MCF 10A (cell line): ENCODE measurements at regions of chrX and their contacts with region 1.

Region 1: GRCh38 chrX:45849253-45849862 is 648.7 kb upstream of the DIPK2B start:
- DNase-seq: peak; percentile 75
- H3K4me3 Mint-ChIP-seq: peak overlapping the region; percentile 89
- H3K27ac Mint-ChIP-seq: peak overlapping the region; percentile 67
- H3K4me1 Mint-ChIP-seq: no peaks in the 10 kb centered on the region
- H3K27me3 Mint-ChIP-seq: peaks cover 14% of the 10 kb centered on the region
- CTCF ChIP-seq: peak; percentile 26

Region 2: DNA sequence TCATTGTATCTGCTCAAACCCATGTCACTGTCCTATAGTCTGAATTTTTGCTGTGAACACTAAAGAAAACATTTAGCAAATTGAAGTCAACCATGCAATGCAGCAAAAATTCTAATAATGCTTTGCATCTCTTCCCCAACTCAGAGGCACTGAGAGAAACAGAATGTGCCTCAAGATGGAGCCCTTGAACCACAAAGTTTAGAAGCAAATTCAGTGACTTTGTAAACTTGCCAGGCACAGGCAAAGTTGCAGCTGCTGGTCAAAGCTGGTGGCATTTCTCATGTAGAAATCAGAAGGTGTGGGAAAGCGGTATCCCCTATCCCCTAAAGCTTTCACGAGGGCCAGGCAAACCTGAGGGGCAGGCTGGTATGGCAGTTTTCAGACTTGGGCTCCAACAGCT is 527.0 kb before region 1 on chrX:
- CTCF ChIA-PET with region 1: no interaction called
- POLR2A ChIA-PET with region 1: no interaction called
- intact Hi-C with region 1: loop called (anchors 1 kb)
- DNase-seq: peak; percentile 77
- H3K4me3 Mint-ChIP-seq: no peak overlapping the region
- H3K27ac Mint-ChIP-seq: no peak overlapping the region
- H3K4me1 Mint-ChIP-seq: no peaks in the 10 kb centered on the region
- H3K27me3 Mint-ChIP-seq: peaks cover 68% of the 10 kb centered on the region
- CTCF ChIP-seq: peak; percentile 63

Region 3: GRCh38 chrX:45769761-45770582 is 79.4 kb before region 1 on chrX:
- CTCF ChIA-PET with region 1: no interaction called
- POLR2A ChIA-PET with region 1: interaction called, 25 read pairs
- intact Hi-C with region 1: no loop called
- DNase-seq: peak; percentile 83
- H3K4me3 Mint-ChIP-seq: peak overlapping the region; percentile 74
- H3K27ac Mint-ChIP-seq: peak overlapping the region; percentile 85
- H3K4me1 Mint-ChIP-seq: peaks cover 2% of the 10 kb centered on the region
- H3K27me3 Mint-ChIP-seq: peaks cover 74% of the 10 kb centered on the region
- CTCF ChIP-seq: no peak

Region 4: DNA sequence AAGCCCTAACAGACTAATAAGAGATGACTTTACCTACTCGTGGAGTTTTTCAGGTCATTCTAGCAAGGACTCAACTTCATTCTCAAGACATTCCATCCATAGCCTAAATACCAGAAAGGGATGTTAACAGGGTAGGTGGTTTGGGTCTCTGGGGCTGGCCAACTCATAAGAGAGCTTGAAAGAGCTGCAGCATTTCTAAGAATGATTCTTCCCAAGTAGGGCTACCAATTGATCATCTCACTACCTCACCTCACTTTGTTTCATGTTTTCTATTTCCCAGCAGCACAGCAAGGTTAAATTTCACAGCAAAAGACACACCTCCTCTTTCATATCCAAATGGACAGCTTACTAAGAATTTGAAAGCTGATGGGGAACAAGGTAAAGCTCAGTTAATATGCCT is 33.9 kb before region 1 on chrX:
- CTCF ChIA-PET with region 1: no interaction called
- POLR2A ChIA-PET with region 1: no interaction called
- intact Hi-C with region 1: no loop called
- DNase-seq: no peak
- H3K4me3 Mint-ChIP-seq: no peak overlapping the region
- H3K27ac Mint-ChIP-seq: no peak overlapping the region
- H3K4me1 Mint-ChIP-seq: no peaks in the 10 kb centered on the region
- H3K27me3 Mint-ChIP-seq: peaks cover 14% of the 10 kb centered on the region
- CTCF ChIP-seq: no peak

Region 5: GRCh38 chrX:46260513-46260912 is 411.2 kb after region 1 on chrX:
- CTCF ChIA-PET with region 1: no interaction called
- POLR2A ChIA-PET with region 1: interaction called, 39 read pairs
- intact Hi-C with region 1: loop called (anchors 5 kb)
- DNase-seq: peak; percentile 82
- H3K4me3 Mint-ChIP-seq: no peak overlapping the region
- H3K27ac Mint-ChIP-seq: peak overlapping the region; percentile 77
- H3K4me1 Mint-ChIP-seq: peaks cover 16% of the 10 kb centered on the region
- H3K27me3 Mint-ChIP-seq: peaks cover 32% of the 10 kb centered on the region
- CTCF ChIP-seq: no peak

Region 6: DNA sequence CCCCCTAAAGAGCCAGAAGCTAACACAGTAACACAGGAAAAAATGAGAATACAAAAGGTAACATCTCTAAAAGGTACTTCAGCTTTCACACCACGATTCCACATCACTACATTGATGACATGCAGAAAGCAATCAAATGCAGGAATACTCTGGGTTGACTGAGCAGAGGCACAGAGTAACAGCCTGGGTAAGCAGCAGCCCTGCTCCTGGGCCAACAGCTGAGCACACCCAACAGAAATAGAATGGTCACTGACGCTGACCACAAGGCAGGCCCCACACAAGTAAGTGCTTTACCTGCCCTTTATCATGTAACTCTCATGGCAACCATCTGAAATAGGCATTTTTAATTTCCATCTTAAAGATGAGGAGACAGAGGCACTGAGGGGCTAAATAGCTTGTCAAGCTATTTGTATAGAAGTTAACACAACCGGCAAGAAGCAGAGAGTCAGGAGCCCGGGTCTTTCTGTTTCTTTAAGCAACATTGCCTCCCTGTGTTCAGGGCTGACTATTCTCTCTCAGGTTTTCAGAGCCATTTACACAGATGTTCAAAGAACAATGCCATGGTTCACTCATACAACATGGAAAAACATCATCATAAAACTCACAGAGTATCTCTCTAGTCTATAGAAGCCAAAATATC is 527.0 kb after region 1 on chrX:
- CTCF ChIA-PET with region 1: interaction called, 18 read pairs
- POLR2A ChIA-PET with region 1: interaction called, 10 read pairs
- intact Hi-C with region 1: loop called (anchors 1 kb)
- DNase-seq: peak; percentile 55
- H3K4me3 Mint-ChIP-seq: no peak overlapping the region
- H3K27ac Mint-ChIP-seq: no peak overlapping the region
- H3K4me1 Mint-ChIP-seq: no peaks in the 10 kb centered on the region
- H3K27me3 Mint-ChIP-seq: peaks cover 77% of the 10 kb centered on the region
- CTCF ChIP-seq: peak; percentile 44